Transverse colon (tissue), 4 donors: ENCODE measurements at regions of chr5 and their contacts with region 1.

Region 1: DNA sequence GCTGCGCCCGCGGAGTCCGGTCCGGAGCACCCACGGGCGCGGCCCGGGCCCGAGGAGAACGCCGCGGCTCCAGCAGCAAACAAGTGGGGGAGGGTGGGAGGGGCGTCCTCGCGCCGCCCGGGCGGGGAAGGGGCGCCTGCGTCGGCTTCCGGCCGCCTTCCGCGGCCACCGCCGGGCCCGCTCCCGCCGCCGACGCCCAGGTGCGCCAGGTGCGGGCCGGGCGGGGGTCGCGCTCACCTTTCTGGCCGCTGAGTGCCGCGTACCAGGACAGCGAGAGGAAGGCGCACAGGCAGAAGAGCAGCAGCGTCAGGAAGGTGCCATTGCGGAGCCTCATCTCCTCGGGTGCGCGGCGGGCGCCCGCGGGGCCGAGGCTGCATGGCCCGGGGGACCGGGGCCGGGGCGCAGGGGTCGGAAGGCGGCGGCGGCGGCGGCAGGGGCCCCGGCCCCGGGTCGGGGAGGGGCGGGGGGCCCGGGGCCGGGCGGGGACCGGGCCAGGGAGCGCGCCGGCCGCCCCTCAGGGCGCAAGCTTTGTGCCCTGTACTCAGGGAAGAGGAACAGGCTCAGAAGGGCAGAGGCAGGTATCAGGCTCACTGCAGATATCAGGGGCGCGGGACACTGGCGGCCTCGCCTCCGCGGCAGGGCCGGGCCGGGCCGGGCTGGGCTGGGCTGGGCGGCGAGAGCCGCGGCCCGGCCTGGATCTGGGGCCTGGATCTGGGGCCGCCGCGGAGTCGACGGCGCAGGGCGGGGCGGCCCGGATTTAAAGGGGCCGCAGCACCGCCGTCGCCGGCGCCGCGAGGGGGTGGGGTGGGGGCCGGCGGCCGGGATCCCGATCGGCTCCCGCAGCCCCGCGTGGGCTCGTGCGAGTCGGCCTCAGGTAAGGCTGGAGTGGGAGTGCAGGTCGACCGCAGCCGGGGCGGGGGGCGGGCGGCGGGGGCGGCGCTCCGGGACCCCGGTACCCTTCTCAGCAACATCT is at the start of gene MGAT4B:
- DNase-seq: peak; percentile 87
- H3K4me3 ChIP-seq: peak within 1 kb of the TSS; percentile 69 to 98 (median 90)
- H3K27ac ChIP-seq: peak within 1 kb of the TSS; percentile 96 to 100 (median 99)
- H3K4me1 ChIP-seq: peaks cover 40 to 54% (median 47%) of the 10 kb centered on the region in 4 donors
- H3K27me3 ChIP-seq: no peaks in the 10 kb centered on the region
- CTCF ChIP-seq: no peak
- EP300 ChIP-seq: no peak
- POLR2A ChIP-seq: peak; percentile 0
- total RNA-seq, gene MGAT4B: 495 to 1,114 (median 787) TPM

Region 2: DNA sequence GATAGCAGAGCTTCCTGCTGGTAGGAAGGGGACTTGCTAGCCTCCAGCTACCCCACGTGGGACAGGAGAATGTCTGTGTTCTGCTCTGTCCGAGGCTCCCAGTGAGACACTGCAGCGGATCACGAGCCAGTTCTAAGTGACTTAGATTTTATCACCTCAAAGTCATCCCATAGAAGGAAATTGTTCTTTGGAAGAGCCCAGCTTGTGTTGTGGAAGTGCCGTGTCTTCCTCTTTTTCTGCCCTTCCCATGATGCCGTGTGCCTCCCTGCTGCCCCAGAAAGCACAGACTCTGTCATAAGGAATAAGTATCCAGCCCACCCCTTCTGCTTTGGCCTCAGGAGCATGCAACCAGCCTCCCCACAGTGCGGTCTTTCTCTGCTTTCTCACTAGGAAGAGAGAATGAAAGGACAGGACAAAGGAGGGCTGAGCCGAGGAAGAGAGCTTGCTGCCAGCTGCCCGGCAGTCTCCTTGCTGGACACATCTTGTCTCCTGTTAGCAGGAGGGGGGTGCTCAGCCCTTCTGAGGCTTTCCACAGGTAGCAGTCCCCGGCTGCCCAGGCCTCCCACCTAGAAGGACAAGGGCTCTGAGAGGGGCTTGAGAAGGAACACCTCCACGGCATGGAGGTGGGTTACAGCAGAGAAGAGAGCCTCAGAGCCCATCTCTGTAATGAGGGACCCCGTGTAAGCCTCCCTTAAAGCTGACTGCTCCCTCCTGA is 220.4 kb before region 1 on chr5:
- in situ Hi-C with region 1: no loop called
- intact Hi-C with region 1: no loop called
- DNase-seq: no peak
- H3K4me3 ChIP-seq: no peak overlapping the region
- H3K27ac ChIP-seq: no peak overlapping the region
- H3K4me1 ChIP-seq: no peaks in the 10 kb centered on the region
- H3K27me3 ChIP-seq: no peaks in the 10 kb centered on the region
- CTCF ChIP-seq: no peak
- EP300 ChIP-seq: no peak
- POLR2A ChIP-seq: no peak

Region 3: GRCh38 chr5:179732417-179732917 is 74.1 kb before region 1 on chr5 and contains the start of gene MAML1:
- in situ Hi-C with region 1: no loop called
- intact Hi-C with region 1: loop called (anchors 5 kb)
- DNase-seq: peak; percentile 100
- H3K4me3 ChIP-seq: peak within 1 kb of the TSS; percentile 76 to 98 (median 89)
- H3K27ac ChIP-seq: peak within 1 kb of the TSS; percentile 97 to 99 (median 99)
- H3K4me1 ChIP-seq: peaks cover 22 to 49% (median 32%) of the 10 kb centered on the region in 4 donors
- H3K27me3 ChIP-seq: no peaks in the 10 kb centered on the region
- CTCF ChIP-seq: no peak
- EP300 ChIP-seq: no peak
- POLR2A ChIP-seq: peak; percentile 63
- total RNA-seq, gene MAML1: 22.8 to 28.7 (median 27.3) TPM

Region 4: GRCh38 chr5:179821581-179822432 is 15.3 kb after region 1 on chr5:
- in situ Hi-C with region 1: no loop called
- intact Hi-C with region 1: loop called (anchors 2 kb)
- DNase-seq: peak; percentile 97
- H3K4me3 ChIP-seq: peak overlapping the region; percentile 82 to 99 (median 95)
- H3K27ac ChIP-seq: peak overlapping the region; percentile 99 to 100 (median 100)
- H3K4me1 ChIP-seq: peaks cover 55 to 86% (median 83%) of the 10 kb centered on the region in 4 donors
- H3K27me3 ChIP-seq: no peaks in the 10 kb centered on the region
- CTCF ChIP-seq: peak in 2 of 5 experiments; percentile 9 to 40
- EP300 ChIP-seq: no peak
- POLR2A ChIP-seq: peak; percentile 98

Region 5: GRCh38 chr5:179907570-179908324 is 101.2 kb after region 1 on chr5 and contains the start of gene TBC1D9B:
- in situ Hi-C with region 1: no loop called
- intact Hi-C with region 1: loop called (anchors 5 kb)
- DNase-seq: peak; percentile 71
- H3K4me3 ChIP-seq: peak within 1 kb of the TSS; percentile 56 to 81 (median 66)
- H3K27ac ChIP-seq: peak within 1 kb of the TSS; percentile 82 to 88 (median 84)
- H3K4me1 ChIP-seq: peaks cover 14 to 23% (median 20%) of the 10 kb centered on the region in 4 donors
- H3K27me3 ChIP-seq: no peaks in the 10 kb centered on the region
- CTCF ChIP-seq: peak in 4 of 5 experiments; percentile 28 to 49 (median 35)
- EP300 ChIP-seq: no peak
- POLR2A ChIP-seq: no peak
- total RNA-seq, gene TBC1D9B: 90.5 to 178 (median 127) TPM